Naive thymus-derived CD4-positive, alpha-beta T cell (primary cell): ENCODE measurements at regions of chr5 and their contacts with region 1.

Region 1: DNA sequence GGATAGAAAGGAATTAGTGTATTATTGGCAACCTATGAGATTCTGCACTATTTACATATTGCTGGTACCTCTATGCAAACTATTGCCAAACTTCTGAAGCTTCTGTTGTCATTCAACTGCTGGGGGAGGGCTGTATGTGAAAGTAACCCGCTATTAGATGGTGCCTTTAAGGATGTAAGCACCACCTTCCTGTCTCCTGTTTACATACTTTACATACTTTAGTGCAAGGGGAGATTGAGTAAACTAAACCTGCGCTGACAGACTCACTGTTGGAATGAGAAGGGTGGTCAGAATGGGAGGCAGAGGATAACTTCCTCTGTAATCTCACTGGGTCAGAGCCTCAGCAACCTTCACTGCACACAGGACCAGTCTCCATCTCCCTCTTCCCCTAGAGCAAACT is 123.8 kb downstream of the NR3C1 start:
- DNase-seq: no peak
- ATAC-seq: no peak
- H3K4me3 ChIP-seq: no peak overlapping the region
- H3K4me3 Mint-ChIP-seq: no peak overlapping the region
- H3K27ac ChIP-seq: no peak overlapping the region
- H3K27ac Mint-ChIP-seq: peak overlapping the region in 1 of 9 donors; percentile 10
- H3K4me1 ChIP-seq: no peaks in the 10 kb centered on the region
- H3K4me1 Mint-ChIP-seq: peaks cover 0 to 10% (median 4%) of the 10 kb centered on the region in 7 donors
- H3K27me3 ChIP-seq: no peaks in the 10 kb centered on the region
- H3K27me3 Mint-ChIP-seq: no peaks in the 10 kb centered on the region

Region 2: DNA sequence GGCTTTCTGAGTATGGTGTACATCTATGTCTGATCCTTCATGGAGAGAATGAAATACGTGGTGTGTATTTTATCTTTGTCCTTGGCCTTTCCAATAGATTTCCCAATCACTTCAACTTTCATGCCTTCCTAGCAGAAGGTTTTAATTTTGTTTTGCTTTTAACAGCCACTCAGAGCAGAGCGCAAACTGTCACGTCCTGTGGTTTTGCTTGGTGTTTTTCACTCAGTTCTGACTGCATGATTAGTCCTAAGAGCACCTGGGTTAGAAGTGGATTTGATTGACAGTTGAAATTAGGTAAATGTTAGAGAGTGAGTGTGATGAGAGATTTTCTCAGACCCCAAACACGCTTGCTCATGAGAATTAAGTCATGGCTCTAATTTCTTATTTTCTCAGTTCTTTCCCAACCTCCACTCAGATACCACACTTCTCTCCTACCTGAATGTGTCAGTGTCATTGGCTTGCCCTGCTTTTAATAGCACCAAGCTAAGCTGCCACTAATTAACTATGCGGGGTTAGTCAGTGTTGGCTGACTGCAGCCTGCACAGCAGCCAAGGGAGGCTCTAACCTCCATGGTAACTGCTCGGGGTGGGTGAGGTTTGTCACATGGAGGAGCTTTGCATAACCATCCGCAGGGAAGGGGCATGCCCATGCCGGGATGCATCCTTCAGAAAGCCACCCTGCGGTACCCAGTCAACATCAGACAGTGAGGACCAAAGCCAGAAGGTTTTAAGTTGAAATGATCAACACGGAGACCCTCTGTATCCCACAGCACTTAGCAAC is 49.6 kb before region 1 on chr5:
- CTCF ChIA-PET with region 1: no interaction called
- POLR2A ChIA-PET with region 1: no interaction called
- intact Hi-C with region 1: loop called in 1 of 2 experiments (anchors 5 kb)
- DNase-seq: peak in 7 of 9 donors; percentile 14 to 65 (median 37)
- ATAC-seq: peak; percentile 86
- H3K4me3 ChIP-seq: peak overlapping the region; percentile 19
- H3K4me3 Mint-ChIP-seq: peak overlapping the region; percentile 24 to 81 (median 58)
- H3K27ac ChIP-seq: peak overlapping the region; percentile 16
- H3K27ac Mint-ChIP-seq: peak overlapping the region; percentile 56 to 92 (median 82)
- H3K4me1 ChIP-seq: peaks cover 11 to 25% of the 10 kb centered on the region in 2 donors
- H3K4me1 Mint-ChIP-seq: peaks cover 13 to 49% (median 24%) of the 10 kb centered on the region in 7 donors
- H3K27me3 ChIP-seq: no peaks in the 10 kb centered on the region
- H3K27me3 Mint-ChIP-seq: peaks cover 0 to 4% (median 0%) of the 10 kb centered on the region in 5 donors

Region 3: GRCh38 chr5:143619040-143619622 is 339.4 kb after region 1 on chr5:
- CTCF ChIA-PET with region 1: no interaction called
- POLR2A ChIA-PET with region 1: no interaction called
- intact Hi-C with region 1: no loop called
- DNase-seq: no peak
- ATAC-seq: no peak
- H3K4me3 ChIP-seq: no peak overlapping the region
- H3K4me3 Mint-ChIP-seq: no peak overlapping the region
- H3K27ac ChIP-seq: no peak overlapping the region
- H3K27ac Mint-ChIP-seq: no peak overlapping the region
- H3K4me1 ChIP-seq: no peaks in the 10 kb centered on the region
- H3K4me1 Mint-ChIP-seq: no peaks in the 10 kb centered on the region
- H3K27me3 ChIP-seq: no peaks in the 10 kb centered on the region
- H3K27me3 Mint-ChIP-seq: peaks cover 6 to 24% (median 16%) of the 10 kb centered on the region in 5 donors

Region 4: DNA sequence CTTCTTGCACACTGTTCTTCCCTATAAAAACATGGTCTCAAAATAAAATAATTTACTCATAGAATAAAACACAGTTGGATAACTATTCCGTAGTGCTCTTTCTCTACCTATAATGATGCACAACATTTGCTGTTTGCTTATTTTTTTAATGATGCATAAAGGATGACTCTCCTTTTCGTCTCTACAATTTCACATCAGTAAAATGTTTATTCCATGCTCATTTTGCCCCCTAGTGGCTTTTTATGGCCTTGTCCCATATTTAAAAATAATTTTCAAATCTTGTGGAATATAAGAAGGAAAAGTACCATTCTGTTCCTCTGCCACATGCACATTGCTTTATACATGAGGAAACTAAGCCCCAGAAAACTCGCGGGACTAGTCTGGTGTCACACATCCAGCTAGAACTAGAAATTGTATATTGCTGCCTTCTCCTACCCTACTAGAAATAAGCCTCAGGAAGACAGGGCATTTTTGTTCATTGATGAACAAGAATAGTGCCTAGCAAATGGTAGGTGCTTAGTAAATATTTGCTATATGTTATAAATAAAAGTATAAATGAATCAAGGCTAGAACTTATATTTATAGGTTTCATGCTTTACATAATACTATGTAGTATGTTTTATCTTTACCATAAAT is 903.7 kb after region 1 on chr5:
- CTCF ChIA-PET with region 1: no interaction called
- POLR2A ChIA-PET with region 1: no interaction called
- intact Hi-C with region 1: loop called in 1 of 2 experiments (anchors 5 kb)
- DNase-seq: peak in 6 of 9 donors; percentile 17 to 42 (median 34)
- ATAC-seq: no peak
- H3K4me3 ChIP-seq: no peak overlapping the region
- H3K4me3 Mint-ChIP-seq: no peak overlapping the region
- H3K27ac ChIP-seq: no peak overlapping the region
- H3K27ac Mint-ChIP-seq: peak overlapping the region in 5 of 9 donors; percentile 15 to 71 (median 49)
- H3K4me1 ChIP-seq: peaks cover 19 to 41% of the 10 kb centered on the region in 2 donors
- H3K4me1 Mint-ChIP-seq: peaks cover 19 to 56% (median 43%) of the 10 kb centered on the region in 7 donors
- H3K27me3 ChIP-seq: no peaks in the 10 kb centered on the region
- H3K27me3 Mint-ChIP-seq: peaks cover 0 to 2% (median 0%) of the 10 kb centered on the region in 5 donors